Gastrocnemius medialis (tissue), 4 donors: ENCODE measurements at regions of chr19 and their contacts with region 1.

Region 1: GRCh38 chr19:49127674-49128544 is 8.6 kb downstream of the PPFIA3 start:
- DNase-seq: peak; percentile 94 to 96
- ATAC-seq: peak; percentile 95 to 96
- H3K4me3 ChIP-seq: peak overlapping the region; percentile 33 to 52 (median 46)
- H3K27ac ChIP-seq: peak overlapping the region; percentile 65 to 83 (median 81)
- H3K4me1 ChIP-seq: peaks cover 7 to 17% of the 10 kb centered on the region in 2 donors
- H3K27me3 ChIP-seq: peaks cover 0 to 4% (median 0%) of the 10 kb centered on the region in 3 donors
- CTCF ChIP-seq: peak in 3 of 5 experiments; percentile 12 to 34 (median 19)
- POLR2A ChIP-seq: no peak

Region 2: DNA sequence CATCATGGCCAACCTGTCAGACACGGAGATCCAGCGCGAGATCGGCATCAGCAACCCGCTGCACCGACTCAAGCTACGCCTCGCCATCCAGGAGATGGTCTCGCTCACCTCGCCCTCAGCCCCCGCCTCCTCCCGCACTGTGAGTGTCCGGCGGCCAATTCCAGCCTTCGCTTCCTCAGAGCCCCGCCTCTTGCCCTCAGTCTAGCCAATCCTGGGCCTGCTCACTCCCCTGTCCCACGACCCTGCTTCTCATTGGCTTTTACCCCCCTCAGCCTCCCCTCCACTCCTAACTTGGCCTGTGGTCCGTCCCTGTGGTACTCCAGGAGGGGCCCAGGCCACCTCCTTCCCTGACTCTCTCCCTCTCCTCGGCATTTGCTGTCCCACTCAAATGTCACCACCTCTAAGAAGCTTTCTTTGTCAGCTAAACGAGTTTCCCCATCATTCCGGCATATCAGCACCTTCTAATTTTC is 15.0 kb after region 1 on chr19:
- in situ Hi-C with region 1: no loop called
- intact Hi-C with region 1: loop called (anchors 2 kb)
- DNase-seq: peak; percentile 91 to 92
- ATAC-seq: peak; percentile 94 to 98
- H3K4me3 ChIP-seq: peak overlapping the region; percentile 58 to 67 (median 62)
- H3K27ac ChIP-seq: peak overlapping the region; percentile 48 to 67 (median 56)
- H3K4me1 ChIP-seq: peaks cover 15 to 25% of the 10 kb centered on the region in 2 donors
- H3K27me3 ChIP-seq: no peaks in the 10 kb centered on the region
- CTCF ChIP-seq: no peak
- POLR2A ChIP-seq: peak; percentile 35 to 57

Region 3: DNA sequence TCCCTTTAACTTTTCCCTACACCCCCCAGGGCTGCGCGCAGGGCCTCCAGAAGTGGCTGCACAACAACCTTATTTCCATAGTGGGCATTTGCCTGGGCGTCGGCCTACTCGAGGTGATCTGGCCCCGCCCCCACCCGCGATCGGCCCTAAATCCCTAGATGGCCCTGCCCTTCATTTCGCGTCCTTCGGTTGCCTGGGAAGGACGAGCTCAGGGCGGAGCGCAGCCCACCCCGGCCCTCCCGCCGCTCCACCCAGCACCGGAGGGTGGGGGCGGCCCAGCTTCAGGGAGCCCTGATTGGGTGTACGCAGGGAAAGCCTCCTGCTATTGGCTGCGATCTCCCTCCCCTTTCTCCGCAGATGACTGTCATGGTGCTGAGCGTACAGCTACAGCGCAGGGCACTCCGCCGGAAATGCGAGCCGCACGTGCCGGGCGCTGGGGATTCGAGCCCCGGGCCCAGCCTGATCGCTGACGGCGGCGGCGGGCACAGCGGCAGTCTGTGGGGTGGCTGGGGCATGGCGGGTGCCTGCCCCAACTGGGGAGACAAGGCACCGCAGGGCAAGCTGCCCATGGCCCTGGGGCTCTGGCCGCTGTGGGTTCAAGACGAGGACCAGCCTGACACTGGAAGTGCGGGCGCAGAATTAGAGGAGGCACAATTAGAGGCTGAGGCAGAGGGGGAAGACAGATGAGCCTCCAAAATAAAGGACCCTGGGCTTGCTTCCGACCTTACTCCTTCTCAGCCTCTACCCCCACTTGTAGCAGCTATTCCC is 211.6 kb after region 1 on chr19:
- in situ Hi-C with region 1: no loop called
- intact Hi-C with region 1: loop called (anchors 5 kb)
- DNase-seq: peak; percentile 63 to 78
- ATAC-seq: peak; percentile 92 to 93
- H3K4me3 ChIP-seq: peak overlapping the region; percentile 45 to 53 (median 50)
- H3K27ac ChIP-seq: peak overlapping the region; percentile 45 to 79 (median 72)
- H3K4me1 ChIP-seq: peaks cover 0 to 13% of the 10 kb centered on the region in 2 donors
- H3K27me3 ChIP-seq: peaks cover 0 to 21% (median 17%) of the 10 kb centered on the region in 3 donors
- CTCF ChIP-seq: no peak
- POLR2A ChIP-seq: peak in 1 of 2 donors; percentile 6